Activated naive CD4-positive, alpha-beta T cell treated with anti-CD3 and anti-CD28 coated beads, Interleukin-2, amount 10 ng/mL, durations not matched to agents 7 days and 5 days (primary cell): ENCODE measurements at regions of chr6 and their contacts with region 1.

Region 1: GRCh38 chr6:38871741-38872568 is 156.8 kb downstream of the DNAH8 start:
- DNase-seq: peak; percentile 67
- H3K4me3 Mint-ChIP-seq: no peak overlapping the region
- H3K27ac Mint-ChIP-seq: no peak overlapping the region
- H3K4me1 Mint-ChIP-seq: peaks cover 21% of the 10 kb centered on the region
- H3K27me3 Mint-ChIP-seq: no peaks in the 10 kb centered on the region

Region 2: DNA sequence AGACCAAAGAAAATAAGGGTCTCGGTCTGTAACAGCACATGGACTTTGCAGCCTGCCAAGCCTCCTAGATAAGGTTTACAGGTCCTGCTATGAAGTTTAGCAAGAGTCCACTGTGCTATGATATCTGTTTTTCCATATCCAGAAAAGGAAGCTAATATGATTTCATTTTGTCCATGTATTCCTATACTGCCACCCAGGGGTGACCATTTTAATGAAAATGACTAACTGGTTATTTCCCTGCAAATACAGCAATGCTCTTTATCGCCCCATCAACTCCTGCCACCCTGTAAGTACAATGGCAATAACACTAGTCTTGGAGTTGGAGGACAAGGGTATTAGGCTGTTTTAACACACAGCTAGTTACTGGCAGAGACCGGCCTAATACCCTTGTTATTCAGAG is 61.5 kb after region 1 on chr6:
- CTCF ChIA-PET with region 1: interaction called, 24 read pairs
- DNase-seq: no peak
- H3K4me3 Mint-ChIP-seq: no peak overlapping the region
- H3K27ac Mint-ChIP-seq: no peak overlapping the region
- H3K4me1 Mint-ChIP-seq: no peaks in the 10 kb centered on the region
- H3K27me3 Mint-ChIP-seq: no peaks in the 10 kb centered on the region

Region 3: GRCh38 chr6:38997128-38997761 is 125.3 kb after region 1 on chr6:
- CTCF ChIA-PET with region 1: interaction called, 12 read pairs
- DNase-seq: peak; percentile 48
- H3K4me3 Mint-ChIP-seq: no peak overlapping the region
- H3K27ac Mint-ChIP-seq: no peak overlapping the region
- H3K4me1 Mint-ChIP-seq: no peaks in the 10 kb centered on the region
- H3K27me3 Mint-ChIP-seq: peaks cover 32% of the 10 kb centered on the region

Region 4: GRCh38 chr6:39309942-39310531 is 438.1 kb after region 1 on chr6:
- CTCF ChIA-PET with region 1: interaction called, 14 read pairs
- DNase-seq: peak; percentile 75
- H3K4me3 Mint-ChIP-seq: no peak overlapping the region
- H3K27ac Mint-ChIP-seq: no peak overlapping the region
- H3K4me1 Mint-ChIP-seq: peaks cover 8% of the 10 kb centered on the region
- H3K27me3 Mint-ChIP-seq: peaks cover 58% of the 10 kb centered on the region